ENCODE measurements at regions of chr11 and their contacts with region 1.

Region 1: GRCh38 chr11:11973361-11973800 is 35.0 kb downstream of the DKK3 start:
- DNase-seq: peak; percentile 89

Region 2: DNA sequence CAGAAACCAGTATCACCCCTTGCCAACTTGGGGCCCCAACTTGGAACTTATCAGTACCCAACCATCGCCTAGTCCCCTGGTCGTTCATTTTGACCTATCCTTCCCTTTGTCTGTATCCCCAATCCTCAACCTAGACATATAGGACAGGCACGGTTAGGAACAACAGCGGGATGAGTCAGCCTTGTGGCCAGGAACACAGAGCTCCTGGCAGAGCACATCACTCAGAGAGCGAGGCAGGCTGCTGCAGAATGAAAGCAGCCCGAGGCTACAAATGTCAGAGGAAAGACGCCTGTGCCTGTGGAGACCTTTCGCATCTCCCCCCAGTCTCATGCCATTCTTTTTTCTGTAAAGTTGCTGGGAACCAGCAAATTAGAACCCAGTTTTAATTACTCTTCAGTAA is 20.5 kb after region 1 on chr11:
- intact Hi-C with region 1: loop called (anchors 2 kb)
- DNase-seq: no peak

Region 3: DNA sequence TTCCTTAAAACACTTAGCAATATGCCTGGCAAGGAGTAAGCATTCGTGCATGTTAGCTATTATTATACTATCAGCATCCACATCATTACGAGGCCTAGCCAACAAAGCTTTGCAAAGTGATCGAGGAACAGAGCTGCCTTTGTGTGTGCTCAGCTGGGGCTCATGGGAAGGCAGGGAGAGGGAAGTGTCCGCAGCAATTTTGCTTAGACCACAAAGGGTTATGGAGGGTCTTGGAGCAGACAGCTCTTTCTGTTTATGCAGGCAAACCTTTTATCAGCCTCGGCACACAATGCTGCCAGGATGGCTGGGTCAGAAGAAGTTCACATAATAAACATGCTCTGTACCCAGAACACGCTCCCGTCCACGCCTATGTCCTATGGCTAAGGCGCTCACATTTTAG is 46.0 kb after region 1 on chr11:
- intact Hi-C with region 1: loop called (anchors 2 kb)
- DNase-seq: no peak

Measured in cardiac septum (tissue), 1 donor.